ENCODE measurements at regions of chr15 and their contacts with region 1.

Region 1: DNA sequence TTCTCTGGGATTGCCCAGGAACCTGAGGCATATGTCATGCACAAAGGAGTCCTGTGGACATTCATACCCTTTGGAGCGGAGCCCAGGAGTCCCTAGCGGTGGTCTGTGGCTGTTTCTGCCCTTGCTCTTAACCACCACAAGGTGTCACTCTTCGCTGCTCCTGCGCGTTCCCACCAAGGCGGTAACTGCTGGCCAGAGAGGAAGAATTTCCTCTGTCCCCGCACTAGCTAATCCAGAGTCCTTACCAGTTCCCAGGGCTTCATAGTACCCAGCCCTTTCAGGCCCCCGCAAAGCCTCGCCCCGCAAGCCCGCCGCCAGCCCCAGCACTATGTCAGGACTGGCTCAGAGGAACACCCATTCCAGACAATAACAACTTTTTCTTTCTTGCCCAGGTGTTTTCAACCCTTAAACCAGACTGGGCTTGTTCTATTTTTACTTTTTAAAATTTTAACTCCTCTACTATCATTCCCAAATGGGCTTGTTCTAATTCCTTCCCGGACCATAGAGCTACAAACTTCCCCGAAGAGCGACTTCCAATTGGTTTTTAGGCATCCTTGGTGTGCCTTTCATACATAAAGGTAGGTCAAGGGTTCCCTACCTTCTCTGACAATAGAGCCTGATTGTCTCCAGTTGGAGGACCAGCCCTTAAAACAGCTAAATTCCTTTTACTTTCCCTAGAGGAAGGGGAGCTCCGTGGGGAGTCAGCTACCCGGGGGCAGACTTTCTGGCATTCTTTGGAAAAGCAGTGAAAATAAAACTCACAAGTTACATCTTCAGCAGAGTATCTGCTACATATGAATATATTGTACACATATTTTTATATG is 31.8 kb upstream of the ZNF774 start:
- H3K4me3 ChIP-seq: no peak overlapping the region; the same call in 1 of the 2 replicates
- H3K27ac ChIP-seq: no peak overlapping the region
- H3K4me1 ChIP-seq: peaks cover 12% of the 10 kb centered on the region; the same call in 1 of the 2 replicates
- CTCF ChIP-seq: peak; percentile 98

Region 2: DNA sequence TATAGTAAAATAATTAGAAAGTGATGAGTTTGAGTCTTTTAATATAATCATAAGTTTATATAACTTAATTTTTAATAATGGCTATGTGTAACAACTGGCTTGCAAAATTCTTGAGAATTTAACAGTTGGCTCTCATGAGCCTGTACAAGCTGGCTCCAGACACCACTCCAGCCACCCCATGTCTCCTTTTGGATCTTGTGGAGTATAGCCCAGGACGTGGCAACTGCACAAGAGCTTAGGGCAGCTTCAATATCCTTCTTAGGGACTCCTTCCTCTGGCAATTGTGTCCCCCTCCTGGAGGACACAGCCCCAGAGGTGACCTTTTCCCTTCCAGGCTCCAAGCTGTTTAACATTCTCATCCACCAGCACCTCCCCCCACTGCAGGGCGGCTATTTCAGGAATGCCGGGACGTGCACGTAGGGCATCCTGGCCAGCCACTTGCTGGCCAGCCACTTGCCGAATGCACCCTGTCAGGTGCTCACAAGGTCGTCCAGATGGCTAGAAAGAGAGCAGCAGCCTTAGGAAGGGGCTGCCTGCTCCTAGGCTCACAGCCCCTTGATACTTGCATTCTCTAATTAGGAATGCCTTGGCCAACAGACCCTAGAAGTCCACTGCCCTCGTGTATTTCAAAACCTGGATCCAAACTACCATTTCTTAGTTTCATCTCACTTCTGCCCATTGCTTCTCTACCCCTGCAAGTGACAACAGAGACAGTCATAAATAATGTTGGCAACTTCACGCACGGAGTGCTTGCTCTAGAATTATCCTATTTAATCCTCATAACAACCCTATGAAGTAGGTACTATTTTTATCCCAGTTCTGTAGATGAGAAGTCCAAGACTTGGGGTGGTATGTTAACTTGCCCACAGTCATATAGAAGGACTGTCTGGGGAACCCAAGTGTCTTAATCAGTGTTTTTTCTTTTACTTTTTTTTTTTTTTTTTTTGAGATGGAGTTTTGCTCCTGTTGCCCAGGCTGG is 193.5 kb before region 1 on chr15:
- CTCF ChIA-PET with region 1: no interaction called
- POLR2A ChIA-PET with region 1: no interaction called
- H3K4me3 ChIP-seq: no peak overlapping the region
- H3K27ac ChIP-seq: no peak overlapping the region
- H3K4me1 ChIP-seq: 0 out of 2 replicates have a peak, but pooled peaks cover 3% of the 10 kb centered on the region
- CTCF ChIP-seq: no peak

Region 3: GRCh38 chr15:90300988-90301706 is 19.1 kb before region 1 on chr15:
- CTCF ChIA-PET with region 1: interaction called, 56 read pairs
- POLR2A ChIA-PET with region 1: interaction called, 3 read pairs
- H3K4me3 ChIP-seq: no peak overlapping the region
- H3K27ac ChIP-seq: no peak overlapping the region
- H3K4me1 ChIP-seq: no peaks in the 10 kb centered on the region
- CTCF ChIP-seq: peak; percentile 68

Region 4: DNA sequence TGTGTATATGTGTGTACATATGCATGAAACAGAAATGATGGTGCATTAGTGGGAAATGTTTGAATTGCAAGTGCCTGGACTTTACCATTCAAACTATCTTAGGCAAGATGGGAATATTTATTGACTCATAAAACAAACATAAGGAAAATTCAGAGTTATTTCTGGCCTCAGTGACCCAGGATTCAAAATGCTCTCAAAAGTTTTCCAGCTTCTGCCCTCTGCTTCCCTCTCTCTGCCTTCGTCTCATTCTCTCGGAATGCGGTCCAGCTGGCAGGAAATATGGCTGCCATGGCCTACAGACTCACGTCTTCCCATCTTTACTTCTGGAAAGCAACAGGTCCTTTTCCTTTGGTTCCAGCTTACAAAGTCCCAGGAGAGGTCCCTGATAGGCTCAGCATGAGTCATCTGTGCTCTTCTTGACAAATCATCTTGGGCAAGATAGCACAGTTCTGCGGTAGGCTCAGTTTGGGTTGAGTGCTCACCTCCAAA is 23.1 kb after region 1 on chr15:
- CTCF ChIA-PET with region 1: interaction called, 12 read pairs
- POLR2A ChIA-PET with region 1: no interaction called
- H3K4me3 ChIP-seq: no peak overlapping the region
- H3K27ac ChIP-seq: no peak overlapping the region
- H3K4me1 ChIP-seq: peaks cover 4% of the 10 kb centered on the region; the same call in 1 of the 2 replicates
- CTCF ChIP-seq: no peak

Region 5: DNA sequence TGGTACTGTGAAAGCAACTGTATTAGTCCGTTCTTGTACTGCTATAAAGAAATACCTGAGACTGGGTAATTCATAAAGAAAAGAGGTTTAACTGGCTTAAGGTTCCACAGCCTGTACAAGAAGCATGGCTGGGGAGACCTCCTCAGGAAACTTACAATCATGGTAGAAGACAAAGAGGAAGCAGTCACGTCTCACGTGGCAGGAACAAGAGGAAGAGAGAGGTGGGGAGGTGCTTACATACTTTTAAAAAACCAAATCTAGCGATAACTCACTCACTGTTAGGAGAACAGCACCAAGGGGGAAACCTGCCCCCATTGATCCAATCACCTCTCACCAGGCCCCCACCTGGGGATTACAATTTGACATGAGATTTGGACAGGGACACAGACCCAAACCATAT is 116.7 kb after region 1 on chr15:
- CTCF ChIA-PET with region 1: interaction called, 14 read pairs
- POLR2A ChIA-PET with region 1: no interaction called
- H3K4me3 ChIP-seq: no peak overlapping the region
- H3K27ac ChIP-seq: no peak overlapping the region
- H3K4me1 ChIP-seq: peaks cover 11% of the 10 kb centered on the region
- CTCF ChIP-seq: no peak

Region 6: DNA sequence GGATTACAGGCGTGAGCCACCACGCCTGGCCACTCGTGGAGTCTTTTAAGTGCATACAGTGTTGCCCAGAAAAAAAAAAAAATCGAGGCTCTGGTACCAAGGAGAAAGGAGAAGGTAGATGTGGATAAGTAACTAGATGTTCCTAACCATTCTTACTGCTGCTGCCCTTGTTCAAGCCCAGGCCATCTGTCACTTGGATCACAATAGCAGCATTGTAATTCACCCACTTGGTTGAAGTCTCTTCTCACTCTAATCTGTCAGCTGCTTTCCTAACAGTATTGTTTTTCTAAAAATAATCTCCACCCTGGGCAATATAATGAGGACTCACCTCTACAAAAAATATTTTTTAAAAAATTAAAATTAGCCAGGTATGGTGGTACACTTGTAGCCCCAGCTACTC is 151.5 kb after region 1 on chr15:
- CTCF ChIA-PET with region 1: interaction called, 26 read pairs
- POLR2A ChIA-PET with region 1: no interaction called
- H3K4me3 ChIP-seq: no peak overlapping the region
- H3K27ac ChIP-seq: no peak overlapping the region
- H3K4me1 ChIP-seq: no peaks in the 10 kb centered on the region
- CTCF ChIP-seq: no peak

Region 7: GRCh38 chr15:90530250-90531051 is 210.2 kb after region 1 on chr15:
- CTCF ChIA-PET with region 1: interaction called, 10 read pairs
- POLR2A ChIA-PET with region 1: no interaction called
- H3K4me3 ChIP-seq: peak overlapping the region; percentile 81
- H3K27ac ChIP-seq: peak overlapping the region; percentile 96
- H3K4me1 ChIP-seq: peaks cover 11% of the 10 kb centered on the region
- CTCF ChIP-seq: no peak

Region 8: GRCh38 chr15:90713081-90713480 is 392.8 kb after region 1 on chr15:
- CTCF ChIA-PET with region 1: no interaction called
- POLR2A ChIA-PET with region 1: no interaction called
- H3K4me3 ChIP-seq: no peak overlapping the region
- H3K27ac ChIP-seq: no peak overlapping the region
- H3K4me1 ChIP-seq: peaks cover 13% of the 10 kb centered on the region; the same call in 1 of the 2 replicates
- CTCF ChIP-seq: no peak

Region 9: DNA sequence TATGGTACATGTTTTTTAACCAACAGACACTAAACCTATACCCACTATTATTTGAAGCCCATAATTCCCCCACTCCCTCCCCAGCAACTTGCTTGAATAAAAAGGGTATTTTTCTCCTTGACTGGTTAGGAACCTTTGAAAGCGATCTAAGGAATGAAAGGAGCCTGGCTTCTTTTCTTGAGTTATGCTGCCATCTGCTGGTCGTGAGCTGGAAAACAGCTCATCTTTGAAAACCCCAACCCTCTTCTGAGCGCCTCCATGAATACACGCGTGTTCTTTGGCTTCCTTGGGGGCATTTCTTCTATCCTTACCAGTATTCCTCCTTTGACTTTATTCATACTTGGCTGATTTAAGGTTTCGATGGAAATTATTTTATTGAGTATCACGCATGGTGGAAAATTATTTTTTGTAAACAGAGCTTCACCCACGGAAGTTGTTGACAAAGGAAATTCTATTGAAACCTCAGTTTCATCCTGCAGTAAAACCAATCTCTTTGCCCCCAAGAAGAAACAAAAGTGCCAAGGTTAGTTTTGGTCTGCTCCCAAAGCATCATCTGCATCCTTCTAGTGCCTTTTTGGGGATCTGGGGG is 951.4 kb after region 1 on chr15:
- CTCF ChIA-PET with region 1: interaction called, 11 read pairs
- POLR2A ChIA-PET with region 1: no interaction called
- H3K4me3 ChIP-seq: no peak overlapping the region
- H3K27ac ChIP-seq: no peak overlapping the region
- H3K4me1 ChIP-seq: no peaks in the 10 kb centered on the region
- CTCF ChIP-seq: peak; percentile 63